Prostate gland (tissue), 2 donors: ENCODE measurements at regions of chr4 and their contacts with region 1.

Region 1: DNA sequence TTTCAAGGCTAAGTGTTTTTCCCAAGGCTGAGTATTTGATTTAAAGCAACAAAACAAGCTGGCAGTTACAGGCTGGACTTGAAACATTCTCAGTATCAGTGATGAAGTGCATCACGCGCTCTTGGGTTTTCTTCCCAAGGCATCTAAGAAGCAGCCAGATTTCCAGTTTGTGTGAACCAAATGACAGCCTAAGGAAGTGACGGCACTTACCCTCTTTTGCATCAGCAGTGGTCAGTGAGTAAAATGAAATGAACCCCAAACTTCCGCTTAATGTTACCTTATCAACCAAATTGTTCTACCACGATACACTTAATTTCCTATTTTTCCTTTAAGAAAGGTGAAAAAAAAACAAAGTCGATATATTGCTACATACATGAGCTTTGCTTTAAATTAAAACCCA is 15.8 kb upstream of the GYPE start:
- DNase-seq: no peak
- H3K4me3 ChIP-seq: no peak overlapping the region
- H3K27ac ChIP-seq: no peak overlapping the region
- H3K4me1 ChIP-seq: no peaks in the 10 kb centered on the region
- H3K27me3 ChIP-seq: no peaks in the 10 kb centered on the region
- CTCF ChIP-seq: no peak
- POLR2A ChIP-seq: no peak

Region 2: DNA sequence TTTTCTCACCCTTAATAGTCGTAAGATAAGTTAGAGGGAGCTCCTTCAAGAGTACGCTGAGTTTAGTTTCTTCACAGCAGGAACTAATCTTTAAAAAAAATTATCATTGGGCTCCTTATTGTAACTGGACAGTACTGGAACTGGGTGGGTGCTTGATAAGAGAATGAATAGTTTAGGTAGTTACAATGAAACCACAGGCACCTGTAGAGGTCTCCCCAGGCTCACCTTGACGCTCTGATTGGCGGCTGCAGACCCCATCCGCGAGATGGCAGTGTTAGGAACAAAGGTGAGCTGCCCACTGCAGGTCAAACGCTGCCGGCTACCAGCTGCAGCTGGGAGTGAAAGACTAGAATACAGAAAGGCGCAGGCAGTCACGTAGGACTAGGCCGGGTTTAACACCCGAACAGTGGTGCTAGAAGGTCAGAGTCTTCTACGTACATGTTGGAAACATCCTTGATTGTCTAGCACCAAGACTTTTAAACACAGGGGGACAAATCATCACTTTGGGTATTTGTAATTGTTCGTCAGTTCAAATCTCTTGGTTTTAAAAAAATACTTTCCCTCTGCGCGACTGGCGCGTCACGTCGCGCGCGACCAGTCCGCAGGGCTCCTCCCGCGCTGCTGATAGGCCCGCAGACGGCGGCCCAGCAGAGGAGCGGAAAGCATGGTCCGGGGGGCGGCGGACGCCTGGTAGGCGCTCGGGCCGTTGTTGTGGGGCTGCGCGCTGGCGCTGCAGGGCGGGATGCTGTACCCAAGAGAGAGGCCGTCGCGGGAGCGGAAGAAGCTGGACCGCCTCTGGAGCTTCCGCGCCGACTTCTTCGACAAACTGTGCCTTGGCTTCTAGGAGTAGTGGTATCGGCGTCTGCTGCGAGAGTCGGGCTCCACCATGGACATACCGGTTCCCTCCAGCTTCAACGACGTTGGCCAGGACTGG is 362.1 kb before region 1 on chr4:
- intact Hi-C with region 1: loop called (anchors 10 kb)
- DNase-seq: peak; percentile 54
- H3K4me3 ChIP-seq: peak overlapping the region; percentile 44
- H3K27ac ChIP-seq: peak overlapping the region in 1 of 2 donors; percentile 6
- H3K4me1 ChIP-seq: no peaks in the 10 kb centered on the region
- H3K27me3 ChIP-seq: no peaks in the 10 kb centered on the region
- CTCF ChIP-seq: peak in 2 of 4 experiments; percentile 42
- POLR2A ChIP-seq: no peak